Ovary (tissue), 10 donors: ENCODE measurements at regions of chr3 and their contacts with region 1.

Region 1: GRCh38 chr3:44624749-44625480 is at the start of gene ZNF197:
- DNase-seq: peak; percentile 75 to 85 (median 81)
- H3K4me3 ChIP-seq: peak within 1 kb of the TSS; percentile 90
- H3K27ac ChIP-seq: peak within 1 kb of the TSS; percentile 71 to 73
- H3K4me1 ChIP-seq: peaks cover 5% of the 10 kb centered on the region
- H3K27me3 ChIP-seq: no peaks in the 10 kb centered on the region
- CTCF ChIP-seq: no peak
- EP300 ChIP-seq: no peak
- POLR2A ChIP-seq: no peak
- total RNA-seq, gene ZNF197: 15.1 to 27.0 (median 20.3) TPM

Region 2: DNA sequence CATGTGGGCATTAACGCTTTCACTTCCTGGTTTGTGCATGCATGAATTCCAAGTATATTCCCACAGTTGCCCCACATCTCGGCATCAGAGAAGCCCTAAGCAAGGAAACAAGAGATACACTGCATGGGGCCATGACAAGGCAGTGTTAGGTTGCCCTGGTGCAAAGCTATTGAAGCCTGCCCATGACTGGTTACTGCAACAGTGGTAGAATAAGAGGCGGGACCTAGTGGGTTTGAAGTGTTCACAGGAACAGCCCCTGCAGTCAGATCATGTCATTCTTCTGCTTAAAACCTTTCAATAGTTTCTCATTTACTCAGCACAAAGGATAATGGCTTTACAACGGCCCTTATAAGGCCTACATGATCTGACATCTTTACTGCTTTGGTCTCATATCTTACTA is 464.1 kb before region 1 on chr3:
- intact Hi-C with region 1: no loop called
- DNase-seq: no peak
- H3K4me3 ChIP-seq: no peak overlapping the region
- H3K27ac ChIP-seq: no peak overlapping the region
- H3K4me1 ChIP-seq: no peaks in the 10 kb centered on the region
- H3K27me3 ChIP-seq: no peaks in the 10 kb centered on the region
- CTCF ChIP-seq: no peak
- EP300 ChIP-seq: no peak
- POLR2A ChIP-seq: no peak

Region 3: DNA sequence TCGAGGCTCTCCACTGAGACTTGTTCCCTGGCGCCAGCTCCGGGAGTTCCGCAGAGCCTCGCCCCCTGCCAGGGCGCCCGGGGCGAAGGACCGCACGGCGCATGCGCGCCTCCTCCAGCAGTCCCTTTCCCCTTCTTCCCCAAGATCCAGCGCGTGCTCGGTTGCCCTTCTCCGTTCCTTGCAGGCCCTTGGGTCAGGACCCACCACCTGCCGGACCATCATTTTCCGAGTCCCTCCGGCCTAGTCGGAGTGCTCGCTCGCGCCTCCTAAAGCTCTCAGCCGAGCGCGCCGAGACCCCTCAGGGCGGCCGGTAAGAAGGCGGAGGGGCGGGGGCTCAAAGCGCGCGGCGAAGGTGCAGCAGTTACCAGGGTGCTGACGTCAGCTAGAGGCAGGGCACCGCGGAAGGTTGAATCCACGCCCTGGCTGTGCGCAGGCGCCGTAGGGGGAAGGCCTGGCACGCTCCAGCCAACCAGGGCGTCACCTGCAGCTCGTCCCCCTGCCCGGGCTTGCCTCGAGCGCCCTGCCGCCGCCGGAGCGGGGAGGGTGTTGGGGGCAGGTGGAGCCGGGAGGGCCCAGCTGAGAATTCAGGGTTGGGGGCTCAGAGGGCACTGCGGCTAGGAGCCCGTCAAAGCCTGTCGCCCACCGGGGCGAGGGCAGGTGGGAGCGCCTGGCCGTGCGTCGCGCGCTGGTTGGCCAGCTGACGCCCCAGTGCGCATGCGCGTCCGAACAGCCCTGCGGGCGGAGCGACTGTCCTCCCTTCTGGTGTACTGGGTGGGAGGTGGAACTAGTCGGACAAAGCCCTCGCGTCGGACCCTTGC is 286.7 kb before region 1 on chr3 and contains the start of gene TCAIM:
- intact Hi-C with region 1: loop called in 1 of 4 experiments (anchors 10 kb)
- DNase-seq: peak; percentile 97 to 98 (median 98)
- H3K4me3 ChIP-seq: peak within 1 kb of the TSS; percentile 76
- H3K27ac ChIP-seq: peak within 1 kb of the TSS; percentile 73 to 98
- H3K4me1 ChIP-seq: no peaks in the 10 kb centered on the region
- H3K27me3 ChIP-seq: no peaks in the 10 kb centered on the region
- CTCF ChIP-seq: no peak
- EP300 ChIP-seq: no peak
- POLR2A ChIP-seq: peak; percentile 89
- total RNA-seq, gene TCAIM: 18.7 to 24.0 (median 22.0) TPM

Region 4: GRCh38 chr3:44427683-44428082 is 197.2 kb before region 1 on chr3:
- intact Hi-C with region 1: no loop called
- DNase-seq: peak in 1 of 5 donors; percentile 7
- H3K4me3 ChIP-seq: no peak overlapping the region
- H3K27ac ChIP-seq: no peak overlapping the region
- H3K4me1 ChIP-seq: no peaks in the 10 kb centered on the region
- H3K27me3 ChIP-seq: no peaks in the 10 kb centered on the region
- CTCF ChIP-seq: no peak
- EP300 ChIP-seq: no peak
- POLR2A ChIP-seq: no peak

Region 5: DNA sequence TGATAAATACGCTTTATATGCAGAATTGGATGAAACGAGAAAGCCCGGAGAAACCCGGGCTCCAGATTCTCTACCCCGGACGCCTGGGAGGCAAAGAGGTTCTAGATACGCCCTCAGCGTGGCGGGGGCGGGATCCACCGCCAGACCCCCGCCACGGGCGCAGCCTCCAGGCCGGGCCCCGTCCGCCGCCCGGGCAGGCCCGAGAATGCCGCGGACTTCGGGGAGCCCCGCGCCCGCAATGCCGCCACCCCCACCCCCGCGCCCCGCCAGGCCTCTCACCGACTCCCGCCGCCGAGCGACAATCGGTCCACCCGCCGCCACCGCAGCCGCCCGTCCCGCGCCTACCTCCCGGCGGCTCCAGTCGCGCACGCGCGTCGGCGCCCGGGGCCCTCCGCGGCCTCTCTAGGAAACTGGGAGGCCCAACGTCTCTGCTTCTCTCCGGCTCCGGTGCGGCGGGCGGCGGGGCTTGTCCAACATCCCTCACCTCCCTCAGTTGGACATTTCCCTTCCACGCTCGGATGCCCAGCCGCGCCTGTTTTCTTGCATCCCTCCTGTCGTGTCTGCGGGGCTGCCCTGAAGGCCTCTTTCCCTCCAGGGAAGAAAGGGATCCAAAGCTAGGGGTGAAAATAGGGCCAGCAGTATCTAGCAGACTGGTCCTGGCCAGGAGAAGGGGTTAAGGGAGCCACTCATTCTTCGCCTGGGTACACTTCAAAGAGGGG is 147.4 kb before region 1 on chr3 and contains the start of gene ZNF445:
- intact Hi-C with region 1: loop called in 1 of 4 experiments (anchors 10 kb)
- DNase-seq: peak; percentile 72 to 85 (median 79)
- H3K4me3 ChIP-seq: peak within 1 kb of the TSS; percentile 60
- H3K27ac ChIP-seq: no peak within 1 kb of the TSS
- H3K4me1 ChIP-seq: peaks cover 1% of the 10 kb centered on the region
- H3K27me3 ChIP-seq: no peaks in the 10 kb centered on the region
- CTCF ChIP-seq: no peak
- EP300 ChIP-seq: no peak
- POLR2A ChIP-seq: no peak
- total RNA-seq, gene ZNF445: 5.2 to 30.3 (median 25.9) TPM

Region 6: DNA sequence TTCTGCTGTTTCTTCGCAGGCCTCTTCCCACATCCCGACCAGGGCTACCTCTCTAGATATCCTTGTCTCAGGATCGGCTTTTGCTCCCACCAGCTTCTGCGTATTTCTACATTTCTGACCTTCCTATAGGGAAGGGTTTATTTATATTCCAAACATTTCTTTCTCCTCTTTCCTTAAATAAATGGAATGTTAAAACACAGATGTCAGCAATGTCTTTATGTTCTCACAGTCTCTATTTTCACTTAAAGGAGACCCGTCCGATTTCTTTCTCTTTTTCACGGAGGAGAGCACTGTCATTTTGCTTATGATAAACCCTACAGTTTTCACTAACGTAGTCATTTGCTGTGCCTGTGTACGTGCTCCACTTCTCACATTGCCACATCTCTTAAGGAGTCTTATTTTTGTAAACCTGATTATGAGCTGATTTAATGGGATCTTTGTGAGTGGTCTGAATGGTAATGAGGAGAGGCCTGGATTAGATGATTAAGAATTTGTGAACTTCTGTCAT is 137.3 kb after region 1 on chr3:
- intact Hi-C with region 1: no loop called
- DNase-seq: no peak
- H3K4me3 ChIP-seq: peak overlapping the region; percentile 87
- H3K27ac ChIP-seq: no peak overlapping the region
- H3K4me1 ChIP-seq: peaks cover 3% of the 10 kb centered on the region
- H3K27me3 ChIP-seq: no peaks in the 10 kb centered on the region
- CTCF ChIP-seq: no peak
- EP300 ChIP-seq: no peak
- POLR2A ChIP-seq: no peak

Region 7: DNA sequence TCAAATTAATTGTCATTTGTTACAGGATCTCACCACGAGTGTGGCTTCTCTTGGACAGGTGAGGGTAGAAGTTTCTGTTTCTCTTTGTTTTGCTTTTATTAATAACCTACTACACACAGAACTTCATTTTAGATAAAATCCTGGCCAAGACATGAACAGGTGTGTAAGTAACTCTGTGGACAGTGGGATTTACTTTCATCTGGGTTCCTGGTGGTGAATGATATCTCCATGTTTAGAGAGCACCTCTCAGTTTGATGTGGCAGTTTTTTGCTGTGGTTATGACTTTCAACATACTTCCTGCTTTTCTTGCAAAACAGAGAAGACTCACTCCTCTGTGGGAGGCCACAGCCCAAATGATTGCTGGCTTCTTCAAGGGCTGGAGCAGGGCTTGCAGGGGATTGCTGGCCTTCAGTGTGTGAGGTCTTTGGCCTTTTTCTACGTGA is 1473.4 kb after region 1 on chr3:
- intact Hi-C with region 1: no loop called
- DNase-seq: peak in 1 of 5 donors; percentile 53
- H3K4me3 ChIP-seq: no peak overlapping the region
- H3K27ac ChIP-seq: no peak overlapping the region
- H3K4me1 ChIP-seq: no peaks in the 10 kb centered on the region
- H3K27me3 ChIP-seq: no peaks in the 10 kb centered on the region
- CTCF ChIP-seq: no peak
- EP300 ChIP-seq: no peak
- POLR2A ChIP-seq: no peak